ENCODE measurements at regions of chr16 and their contacts with region 1.

Region 1: GRCh38 chr16:78705694-78706093 is 606.2 kb downstream of the WWOX start:
- DNase-seq: peak in 4 of 5 donors; percentile 23 to 48 (median 44)
- H3K4me3 ChIP-seq: no peak overlapping the region
- H3K4me3 Mint-ChIP-seq: no peak overlapping the region
- H3K27ac ChIP-seq: no peak overlapping the region
- H3K27ac Mint-ChIP-seq: no peak overlapping the region
- H3K4me1 ChIP-seq: no peaks in the 10 kb centered on the region
- H3K4me1 Mint-ChIP-seq: peaks cover 0 to 3% (median 0%) of the 10 kb centered on the region in 4 donors
- H3K27me3 ChIP-seq: no peaks in the 10 kb centered on the region
- H3K27me3 Mint-ChIP-seq: no peaks in the 10 kb centered on the region

Region 2: DNA sequence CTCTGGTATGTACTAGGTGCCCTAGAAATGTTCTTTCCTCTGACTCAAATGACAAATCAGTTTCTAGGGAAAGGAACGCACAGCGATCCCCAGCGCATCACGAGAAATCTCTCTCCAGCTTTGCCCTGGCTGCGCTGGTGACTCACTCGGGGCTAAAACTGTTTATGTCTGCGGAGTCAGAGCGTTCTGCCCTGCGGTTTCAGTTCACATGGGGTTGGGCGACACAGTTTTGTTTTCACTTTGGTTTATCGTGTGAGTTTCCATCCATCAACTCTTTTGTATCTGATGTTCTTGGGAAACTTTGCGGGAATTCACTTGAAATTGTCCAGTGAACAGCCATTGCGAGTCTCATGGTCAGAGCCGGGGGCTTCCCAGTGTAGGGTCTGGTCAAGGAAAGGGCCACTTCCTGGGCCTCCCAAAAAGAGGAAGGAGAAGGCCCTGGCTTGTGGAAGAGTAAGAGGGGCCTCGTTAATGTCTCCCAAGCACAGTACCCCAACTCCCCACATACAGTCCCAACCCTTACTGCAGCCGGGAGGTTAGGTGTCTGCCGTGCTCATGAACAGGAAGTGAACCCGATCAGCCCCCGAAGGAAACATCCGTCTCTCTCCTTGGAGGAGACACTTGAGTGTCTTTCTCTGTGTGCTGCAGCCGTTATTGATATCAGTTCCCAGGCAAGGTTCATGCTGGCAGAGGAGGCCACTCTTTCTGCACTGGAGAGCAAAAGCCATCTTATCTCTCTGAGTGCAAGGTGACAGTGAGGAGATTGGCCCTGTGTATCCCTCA is 37.0 kb after region 1 on chr16:
- CTCF ChIA-PET with region 1: interaction called, 3 read pairs
- POLR2A ChIA-PET with region 1: interaction called, 6 read pairs
- intact Hi-C with region 1: loop called (anchors 5 kb)
- DNase-seq: peak; percentile 73 to 91 (median 80)
- H3K4me3 ChIP-seq: peak overlapping the region; percentile 64 to 82
- H3K4me3 Mint-ChIP-seq: peak overlapping the region; percentile 81 to 90 (median 88)
- H3K27ac ChIP-seq: peak overlapping the region; percentile 81
- H3K27ac Mint-ChIP-seq: peak overlapping the region; percentile 93 to 99 (median 98)
- H3K4me1 ChIP-seq: peaks cover 33% of the 10 kb centered on the region
- H3K4me1 Mint-ChIP-seq: peaks cover 26 to 48% (median 30%) of the 10 kb centered on the region in 4 donors
- H3K27me3 ChIP-seq: no peaks in the 10 kb centered on the region
- H3K27me3 Mint-ChIP-seq: no peaks in the 10 kb centered on the region

Region 3: GRCh38 chr16:78749745-78750268 is 44.1 kb after region 1 on chr16:
- CTCF ChIA-PET with region 1: interaction called, 4 read pairs
- POLR2A ChIA-PET with region 1: interaction called, 11 read pairs
- intact Hi-C with region 1: no loop called
- DNase-seq: peak in 4 of 5 donors; percentile 27 to 47 (median 34)
- H3K4me3 ChIP-seq: peak overlapping the region in 1 of 2 donors; percentile 5
- H3K4me3 Mint-ChIP-seq: peak overlapping the region; percentile 23 to 85 (median 68)
- H3K27ac ChIP-seq: peak overlapping the region; percentile 10
- H3K27ac Mint-ChIP-seq: peak overlapping the region; percentile 14 to 96 (median 55)
- H3K4me1 ChIP-seq: peaks cover 32% of the 10 kb centered on the region
- H3K4me1 Mint-ChIP-seq: peaks cover 26 to 38% (median 29%) of the 10 kb centered on the region in 4 donors
- H3K27me3 ChIP-seq: no peaks in the 10 kb centered on the region
- H3K27me3 Mint-ChIP-seq: no peaks in the 10 kb centered on the region

Region 4: DNA sequence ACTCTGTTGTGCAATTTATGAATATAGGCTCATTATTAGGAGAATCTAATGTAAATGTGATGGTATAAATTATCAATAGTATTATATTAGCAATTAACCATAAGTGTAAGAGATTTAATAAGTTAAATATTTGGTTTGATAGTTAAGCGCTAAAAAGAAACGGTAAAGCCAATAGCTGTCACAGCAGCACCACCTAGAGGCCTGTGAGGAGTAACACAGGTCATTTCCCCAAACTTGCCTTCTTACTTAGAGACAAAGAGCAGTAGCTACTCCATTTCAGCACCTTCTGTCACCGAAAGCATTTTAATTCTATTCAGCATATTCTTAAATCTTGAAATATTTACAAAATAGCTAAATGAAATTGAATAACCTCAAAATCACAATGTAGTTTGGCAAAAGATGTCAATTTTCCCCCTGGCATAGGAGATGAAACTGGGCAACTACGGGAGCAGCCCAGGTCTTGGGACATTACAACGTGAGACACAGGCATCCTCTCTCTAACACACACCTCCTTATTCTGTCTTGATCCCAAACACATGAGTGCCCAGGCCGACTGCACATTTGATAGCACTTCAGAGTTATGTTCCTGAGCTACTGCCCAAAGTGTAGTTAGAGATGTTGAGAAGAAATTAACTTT is 1820.8 kb after region 1 on chr16:
- CTCF ChIA-PET with region 1: no interaction called
- POLR2A ChIA-PET with region 1: no interaction called
- intact Hi-C with region 1: loop called (anchors 10 kb)
- DNase-seq: peak; percentile 53 to 66 (median 62)
- H3K4me3 ChIP-seq: no peak overlapping the region
- H3K4me3 Mint-ChIP-seq: no peak overlapping the region
- H3K27ac ChIP-seq: no peak overlapping the region
- H3K27ac Mint-ChIP-seq: peak overlapping the region in 1 of 7 donors; percentile 18
- H3K4me1 ChIP-seq: peaks cover 6% of the 10 kb centered on the region
- H3K4me1 Mint-ChIP-seq: peaks cover 0 to 4% (median 2%) of the 10 kb centered on the region in 4 donors
- H3K27me3 ChIP-seq: no peaks in the 10 kb centered on the region
- H3K27me3 Mint-ChIP-seq: no peaks in the 10 kb centered on the region

Measured in CD4-positive, alpha-beta memory T cell (primary cell).